H1 (cell line): ENCODE measurements at regions of chr1 and their contacts with region 1.

Region 1: GRCh38 chr1:107474877-107475612 is 334.2 kb downstream of the NTNG1 start:
- DNase-seq: no peak
- H3K4me3 ChIP-seq: no peak overlapping the region
- H3K27ac ChIP-seq: no peak overlapping the region
- H3K4me1 ChIP-seq: no peaks in the 10 kb centered on the region
- H3K27me3 ChIP-seq: no peaks in the 10 kb centered on the region
- CTCF ChIP-seq: no peak
- EP300 ChIP-seq: no peak
- POLR2A ChIP-seq: no peak
- RAD21 ChIP-seq: no peak

Region 2: DNA sequence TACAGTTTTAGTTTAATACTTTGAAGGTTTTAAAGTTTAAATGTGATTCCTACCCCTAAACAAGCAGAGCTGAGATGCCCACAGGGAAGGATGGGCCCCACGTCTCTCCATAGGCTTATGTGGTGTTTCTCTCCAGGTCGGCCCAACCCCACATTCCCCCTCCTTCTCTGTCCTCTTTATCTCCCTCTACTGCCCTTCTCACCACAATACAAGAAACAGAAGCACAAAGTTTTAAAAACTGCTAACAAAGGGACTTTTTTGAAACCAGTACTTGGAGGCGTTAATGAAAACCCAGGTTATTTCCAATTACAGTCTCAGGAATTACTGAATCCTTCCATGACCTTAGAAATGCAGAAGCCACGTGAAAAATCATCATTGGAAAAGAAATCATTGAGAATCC is 10.2 kb before region 1 on chr1:
- CTCF ChIA-PET with region 1: interaction called, 44 read pairs
- POLR2A ChIA-PET with region 1: no interaction called
- DNase-seq: peak in 1 of 2 experiments; percentile 9
- H3K4me3 ChIP-seq: no peak overlapping the region
- H3K27ac ChIP-seq: no peak overlapping the region
- H3K4me1 ChIP-seq: no peaks in the 10 kb centered on the region
- H3K27me3 ChIP-seq: no peaks in the 10 kb centered on the region
- CTCF ChIP-seq: peak; percentile 16 to 42 (median 25); a peak in 3 of 4 replicates
- EP300 ChIP-seq: no peak
- POLR2A ChIP-seq: no peak
- RAD21 ChIP-seq: peak; percentile 39 to 58

Region 3: GRCh38 chr1:107486349-107486748 is 11.3 kb after region 1 on chr1:
- CTCF ChIA-PET with region 1: interaction called, 23 read pairs
- POLR2A ChIA-PET with region 1: no interaction called
- DNase-seq: no peak
- H3K4me3 ChIP-seq: no peak overlapping the region
- H3K27ac ChIP-seq: no peak overlapping the region
- H3K4me1 ChIP-seq: peaks cover 0 to 3% (median 0%) of the 10 kb centered on the region in 4 experiments; a peak in 1 of 7 replicates
- H3K27me3 ChIP-seq: no peaks in the 10 kb centered on the region
- CTCF ChIP-seq: no peak
- EP300 ChIP-seq: no peak
- POLR2A ChIP-seq: no peak
- RAD21 ChIP-seq: no peak

Region 4: GRCh38 chr1:107491582-107491981 is 16.5 kb after region 1 on chr1:
- CTCF ChIA-PET with region 1: interaction called, 23 read pairs
- POLR2A ChIA-PET with region 1: no interaction called
- DNase-seq: no peak
- H3K4me3 ChIP-seq: no peak overlapping the region
- H3K27ac ChIP-seq: no peak overlapping the region
- H3K4me1 ChIP-seq: peaks cover 0 to 2% (median 0%) of the 10 kb centered on the region in 4 experiments; a peak in 1 of 7 replicates
- H3K27me3 ChIP-seq: no peaks in the 10 kb centered on the region
- CTCF ChIP-seq: no peak
- EP300 ChIP-seq: no peak
- POLR2A ChIP-seq: no peak
- RAD21 ChIP-seq: no peak